ENCODE measurements at regions of chr2 and their contacts with region 1.

Region 1: GRCh38 chr2:15636972-15637785 is 45.5 kb downstream of the DDX1 start:
- DNase-seq: peak; percentile 58 to 94 (median 86)

Region 2: GRCh38 chr2:16281451-16282336 is 644.5 kb after region 1 on chr2:
- intact Hi-C with region 1: loop called (anchors 5 kb)
- DNase-seq: peak in 33 of 42 donors; percentile 16 to 79 (median 49)

Region 3: GRCh38 chr2:16507655-16508489 is 870.7 kb after region 1 on chr2:
- intact Hi-C with region 1: loop called (anchors 10 kb)
- DNase-seq: peak in 40 of 42 donors; percentile 20 to 84 (median 64)

Region 4: GRCh38 chr2:16756831-16757644 is 1119.9 kb after region 1 on chr2:
- intact Hi-C with region 1: loop called (anchors 10 kb)
- DNase-seq: peak; percentile 51 to 95 (median 88)